AG04450 (cell line): ENCODE measurements at regions of chr17 and their contacts with region 1.

Region 1: GRCh38 chr17:81711814-81712467 is at the start of gene SLC25A10:
- DNase-seq: no peak
- H3K4me3 ChIP-seq: peak within 1 kb of the TSS; percentile 66
- H3K27ac ChIP-seq: no peak within 1 kb of the TSS
- H3K27me3 ChIP-seq: no peaks in the 10 kb centered on the region
- CTCF ChIP-seq: no peak
- polyA plus RNA-seq, gene SLC25A10: 3.3 and 4.1 TPM in 2 replicates

Region 2: GRCh38 chr17:81722184-81723120 is 10.5 kb after region 1 on chr17:
- CTCF ChIA-PET with region 1: no interaction called
- POLR2A ChIA-PET with region 1: interaction called, 10 read pairs
- DNase-seq: no peak
- H3K4me3 ChIP-seq: no peak overlapping the region
- H3K27ac ChIP-seq: no peak overlapping the region
- H3K27me3 ChIP-seq: no peaks in the 10 kb centered on the region
- CTCF ChIP-seq: no peak